HEK293 (cell line): ENCODE measurements at regions of chr15 and their contacts with region 1.

Region 1: DNA sequence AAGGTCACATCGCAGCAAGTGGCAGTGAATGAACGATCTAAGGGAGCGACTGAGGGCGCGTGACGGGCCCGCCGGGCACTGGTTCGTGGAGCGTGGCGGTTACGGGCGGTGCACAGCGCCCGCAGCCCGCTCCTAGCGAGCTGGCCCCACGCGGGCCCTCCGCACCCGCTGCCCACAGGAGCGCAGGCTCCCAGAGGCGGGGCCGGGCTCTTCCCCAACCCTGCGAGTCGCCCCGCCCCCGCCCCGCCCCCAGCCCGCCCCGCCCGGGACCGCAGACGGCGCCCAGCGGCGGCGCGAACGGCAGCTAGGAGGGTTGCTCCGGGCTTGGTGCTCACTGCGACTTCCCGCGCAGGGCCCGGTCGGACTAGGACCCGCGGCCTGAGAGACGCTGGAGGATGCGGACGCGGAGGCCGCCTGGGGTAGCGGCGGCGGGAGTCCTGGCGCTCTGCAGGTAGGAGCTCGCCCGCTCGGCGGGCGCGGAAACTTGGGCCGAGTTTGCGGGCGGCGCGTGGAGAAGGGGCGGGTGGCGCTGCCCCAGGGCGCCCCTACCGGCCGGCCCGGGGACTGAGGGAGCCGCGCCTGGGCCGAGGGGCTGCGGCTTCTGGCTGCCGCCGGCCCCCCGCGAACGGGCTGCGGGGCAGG is at the start of gene C15orf39:
- H3K4me3 ChIP-seq: peak within 1 kb of the TSS; percentile 85
- H3K27ac ChIP-seq: peak within 1 kb of the TSS; percentile 93
- H3K4me1 ChIP-seq: peaks cover 21% of the 10 kb centered on the region
- CTCF ChIP-seq: peak; percentile 79

Region 2: GRCh38 chr15:74826364-74826819 is 375.3 kb before region 1 on chr15 and contains the start of gene CPLX3:
- CTCF ChIA-PET with region 1: no interaction called
- POLR2A ChIA-PET with region 1: no interaction called
- H3K4me3 ChIP-seq: no peak within 1 kb of the TSS
- H3K27ac ChIP-seq: no peak within 1 kb of the TSS
- H3K4me1 ChIP-seq: 0 out of 2 replicates have a peak, but pooled peaks cover 2% of the 10 kb centered on the region
- CTCF ChIP-seq: no peak

Region 3: DNA sequence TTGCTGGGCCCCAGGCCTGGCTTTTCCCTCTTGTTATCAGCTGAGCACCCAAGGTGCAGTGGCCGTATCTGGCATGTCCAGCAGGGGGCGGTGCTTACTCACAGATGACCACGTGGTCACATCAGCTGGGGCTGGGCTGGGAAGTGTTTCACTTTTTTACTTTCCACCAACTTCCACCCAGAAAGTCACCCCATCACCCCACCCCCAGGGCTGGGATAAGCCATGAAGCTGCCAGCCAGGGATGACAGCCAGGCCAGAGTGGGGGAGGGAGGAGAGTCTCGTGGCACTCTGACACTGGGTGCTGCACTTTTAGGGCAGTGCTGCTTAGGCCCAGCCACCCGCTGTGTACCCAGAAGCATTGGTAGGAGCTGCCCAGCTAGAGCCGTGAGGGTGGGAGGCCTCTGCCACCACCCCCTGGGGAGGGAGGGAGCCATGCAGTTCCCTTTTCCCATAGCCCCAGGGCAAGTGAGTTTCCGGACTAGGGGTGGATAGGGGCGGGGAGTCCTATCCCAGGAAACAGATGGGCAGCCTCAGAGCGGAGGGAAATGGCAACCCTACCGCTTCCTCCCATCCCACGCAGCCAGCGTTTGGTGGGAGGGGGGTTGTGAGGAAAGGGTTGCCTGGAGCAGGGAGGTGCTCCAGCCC is 172.2 kb before region 1 on chr15:
- CTCF ChIA-PET with region 1: interaction called, 114 read pairs
- POLR2A ChIA-PET with region 1: interaction called, 20 read pairs
- H3K4me3 ChIP-seq: no peak overlapping the region
- H3K27ac ChIP-seq: no peak overlapping the region
- H3K4me1 ChIP-seq: peaks cover 5% of the 10 kb centered on the region; the same call in 1 of the 2 replicates
- CTCF ChIP-seq: peak; percentile 93

Region 4: GRCh38 chr15:75042730-75043508 is 158.8 kb before region 1 on chr15:
- CTCF ChIA-PET with region 1: interaction called, 24 read pairs
- POLR2A ChIA-PET with region 1: interaction called, 10 read pairs
- H3K4me3 ChIP-seq: no peak overlapping the region
- H3K27ac ChIP-seq: no peak overlapping the region; the same call in 1 of the 2 replicates
- H3K4me1 ChIP-seq: peaks cover 20% of the 10 kb centered on the region
- CTCF ChIP-seq: peak; percentile 63; the same call in 1 of the 2 replicates

Region 5: GRCh38 chr15:75067123-75067830 is 134.5 kb before region 1 on chr15:
- CTCF ChIA-PET with region 1: interaction called, 9 read pairs
- POLR2A ChIA-PET with region 1: interaction called, 15 read pairs
- H3K4me3 ChIP-seq: no peak overlapping the region
- H3K27ac ChIP-seq: no peak overlapping the region
- H3K4me1 ChIP-seq: peaks cover 17% of the 10 kb centered on the region
- CTCF ChIP-seq: no peak

Region 6: DNA sequence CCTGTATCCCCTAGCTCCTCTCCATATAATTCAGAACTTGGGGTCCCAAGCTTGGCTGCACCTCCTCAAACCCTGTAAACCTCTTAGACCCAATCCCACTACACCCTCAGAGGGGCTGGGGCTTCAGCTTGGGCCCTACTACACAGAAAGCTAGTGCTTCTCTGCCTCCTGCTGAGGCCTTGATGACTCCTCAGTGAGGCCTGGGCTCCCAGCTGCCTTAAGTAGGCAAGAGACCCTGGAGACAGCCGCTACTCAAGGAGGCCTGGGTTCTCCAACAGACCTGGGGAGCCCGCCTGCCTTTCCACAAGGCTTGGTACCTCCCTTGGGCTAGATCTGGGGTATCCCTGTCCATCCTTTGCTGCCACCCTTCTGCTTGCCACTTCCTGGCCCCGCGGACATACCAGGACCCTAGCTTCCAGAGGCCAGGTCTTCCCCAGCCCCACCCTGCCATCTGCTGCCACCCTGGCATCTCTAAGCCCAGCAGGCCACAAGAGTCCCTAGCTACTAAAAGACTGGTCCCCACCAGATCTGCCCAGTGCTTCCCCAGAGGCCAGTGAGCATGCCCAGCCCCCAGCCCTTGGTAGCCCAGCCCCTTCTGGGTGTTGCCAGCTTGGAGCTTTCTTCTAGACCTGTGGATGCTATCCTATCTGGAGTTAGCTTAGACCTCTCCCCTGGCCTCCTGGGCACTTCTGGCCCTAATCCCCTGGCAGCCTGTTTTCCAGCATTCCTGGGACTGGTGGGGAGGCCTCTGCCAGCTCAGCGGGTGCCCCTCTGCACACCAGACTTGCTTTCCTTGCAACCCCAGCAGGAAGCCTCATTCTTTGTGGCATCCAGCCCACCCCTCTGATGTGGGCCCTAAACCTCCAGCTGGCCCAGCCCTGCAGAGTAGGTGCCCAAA is 13.6 kb after region 1 on chr15:
- CTCF ChIA-PET with region 1: interaction called, 10 read pairs
- POLR2A ChIA-PET with region 1: interaction called, 12 read pairs
- H3K4me3 ChIP-seq: no peak overlapping the region
- H3K27ac ChIP-seq: no peak overlapping the region
- H3K4me1 ChIP-seq: no peaks in the 10 kb centered on the region
- CTCF ChIP-seq: no peak